Posterior cingulate gyrus (tissue), 11 donors: ENCODE measurements at regions of chr4 and their contacts with region 1.

Region 1: GRCh38 chr4:54217642-54218495 is 11.2 kb upstream of the PDGFRA start:
- DNase-seq: peak in 8 of 10 donors; percentile 42 to 91 (median 66)

Region 2: DNA sequence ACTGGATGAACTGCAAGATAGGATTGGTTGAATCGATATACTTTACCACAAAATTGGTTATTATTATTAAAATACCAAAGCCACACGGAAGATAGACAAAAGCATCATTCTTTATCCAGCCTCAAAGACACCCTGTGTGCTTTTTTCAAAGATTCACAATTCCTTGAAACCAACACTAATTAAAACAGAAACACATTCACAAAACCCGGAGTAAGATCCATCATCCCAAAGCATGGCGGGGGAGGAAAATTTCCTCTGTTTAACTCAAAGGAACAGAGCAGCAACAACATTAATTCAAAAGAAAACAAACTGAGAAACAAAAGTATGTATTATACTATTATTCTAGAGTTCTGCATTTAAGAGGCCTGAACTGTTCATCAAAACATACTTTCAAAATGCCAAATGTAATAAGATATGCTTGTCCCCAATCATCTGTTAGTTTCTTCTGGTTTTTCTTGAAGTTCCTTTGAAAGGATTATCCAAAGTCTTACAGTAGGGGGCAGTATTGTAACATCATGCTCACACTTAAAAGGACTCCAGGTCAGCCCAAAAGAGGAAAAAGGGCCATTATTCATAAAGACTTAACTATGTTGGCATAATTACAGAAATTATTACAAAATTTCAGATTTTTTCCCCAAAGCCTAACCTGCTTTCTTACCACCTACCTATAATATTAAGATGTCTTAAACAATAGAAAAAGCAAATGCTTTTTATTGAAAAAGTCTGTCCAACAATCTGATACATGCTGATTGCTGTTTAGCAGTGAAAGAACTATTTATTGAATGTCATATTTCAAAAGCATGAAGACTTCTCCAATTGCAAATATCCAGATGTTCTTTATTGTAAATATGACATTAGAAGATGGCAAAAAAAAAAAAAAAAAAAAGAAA is 1020.7 kb before region 1 on chr4:
- intact Hi-C with region 1: loop called (anchors 5 kb)
- DNase-seq: no peak

Region 3: DNA sequence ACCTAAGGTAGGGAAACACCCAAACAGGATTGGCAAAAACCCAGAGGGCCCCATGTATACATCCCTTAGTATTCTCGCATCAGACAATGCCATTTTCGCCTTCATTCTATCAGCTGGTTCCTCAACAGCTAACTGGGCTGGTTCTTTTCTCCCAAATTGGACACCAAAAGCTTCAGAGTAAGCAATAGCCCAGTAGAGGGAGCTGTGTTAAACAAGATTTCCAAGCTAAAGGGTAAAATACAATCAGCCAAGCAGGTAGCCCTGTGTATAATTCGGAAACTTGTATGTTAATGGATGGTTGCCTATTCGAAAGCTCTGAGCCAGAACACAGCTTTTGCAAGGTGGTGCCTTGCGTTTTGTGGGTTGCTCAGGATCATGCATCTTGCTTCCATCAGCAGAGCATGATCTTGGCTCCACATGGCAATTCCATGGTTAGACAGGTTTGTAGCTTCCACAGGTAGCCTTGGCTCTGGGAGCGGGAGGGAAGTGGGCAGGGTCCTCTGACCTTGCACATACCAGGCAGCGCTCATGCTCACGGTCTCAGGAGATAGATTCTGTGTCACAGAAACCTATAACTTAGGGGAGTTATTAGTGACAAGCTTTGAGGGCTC is 511.3 kb before region 1 on chr4:
- intact Hi-C with region 1: loop called (anchors 5 kb)
- DNase-seq: no peak

Region 4: GRCh38 chr4:53908661-53909078 is 309.2 kb before region 1 on chr4:
- intact Hi-C with region 1: loop called (anchors 1 kb)
- DNase-seq: peak in 2 of 10 donors; percentile 13 to 30

Region 5: DNA sequence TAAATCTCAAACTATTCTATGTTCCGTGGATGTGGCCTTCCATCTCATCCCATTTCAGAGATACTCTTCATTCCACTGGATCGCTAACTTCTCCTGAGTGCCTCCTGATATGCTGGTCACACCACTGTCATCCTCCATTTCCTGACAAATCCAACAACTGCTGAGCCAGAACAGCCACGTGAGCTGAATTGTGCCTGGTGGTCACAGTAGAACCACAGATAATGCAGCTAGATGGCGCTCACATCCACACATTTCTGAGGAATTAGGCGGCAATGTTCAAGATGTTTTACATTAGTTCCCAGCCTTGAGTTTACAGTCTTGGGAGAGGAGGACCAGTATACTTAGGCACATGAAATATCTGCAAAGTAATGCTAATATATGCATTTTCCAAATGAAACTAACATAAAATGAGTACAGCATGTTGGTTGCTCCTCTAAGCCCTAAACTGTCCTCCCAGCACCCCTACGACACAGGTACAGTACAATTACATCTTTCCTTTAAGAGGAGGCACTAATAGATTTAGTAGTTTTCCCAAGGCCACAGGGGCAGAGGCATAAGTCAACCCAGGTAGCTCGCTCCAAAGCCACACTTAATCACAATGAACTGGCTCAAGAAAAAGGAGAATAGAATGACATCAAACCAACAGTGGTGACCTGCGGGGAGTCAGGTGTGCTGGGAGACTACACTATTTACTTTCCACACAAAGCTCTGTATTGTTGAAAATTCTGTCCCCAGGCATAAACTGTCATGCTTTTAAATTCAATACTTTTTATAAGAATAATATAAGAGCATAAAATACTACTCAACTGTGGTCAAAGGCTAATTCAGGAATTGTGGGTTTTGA is 287.7 kb before region 1 on chr4:
- intact Hi-C with region 1: loop called (anchors 1 kb)
- DNase-seq: peak in 8 of 10 donors; percentile 17 to 89 (median 62)

Region 6: DNA sequence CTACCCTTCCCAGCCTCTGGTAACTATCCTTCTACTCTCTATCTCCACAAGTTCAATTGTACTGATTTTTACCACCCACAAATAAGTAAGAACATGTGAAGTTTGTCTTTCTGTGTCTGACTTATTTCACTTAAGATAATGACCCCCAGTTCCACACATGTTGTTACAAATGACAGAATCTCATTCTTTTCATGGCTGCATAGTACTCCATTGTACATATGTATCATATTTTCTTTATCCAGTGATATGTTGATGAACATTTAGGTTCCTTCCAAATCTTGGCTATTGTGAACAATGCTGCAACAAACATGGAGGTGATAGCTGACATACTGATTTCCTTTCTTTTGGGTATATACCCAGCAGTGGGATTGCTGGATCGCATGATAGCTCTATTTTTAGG is 90.2 kb before region 1 on chr4:
- intact Hi-C with region 1: no loop called
- DNase-seq: no peak